Caco-2 (cell line): ENCODE measurements at regions of chr3 and their contacts with region 1.

Region 1: GRCh38 chr3:23219117-23219516 is 16.0 kb downstream of the UBE2E2 start:
- DNase-seq: peak in 1 of 2 experiments; percentile 2
- H3K4me3 ChIP-seq: no peak overlapping the region
- H3K4me3 Mint-ChIP-seq: no peak overlapping the region
- H3K27ac Mint-ChIP-seq: peak overlapping the region; percentile 29
- H3K4me1 ChIP-seq: peaks cover 24% of the 10 kb centered on the region; the same call in 1 of the 2 replicates
- H3K4me1 Mint-ChIP-seq: peaks cover 9% of the 10 kb centered on the region
- H3K27me3 ChIP-seq: no peaks in the 10 kb centered on the region
- H3K27me3 Mint-ChIP-seq: no peaks in the 10 kb centered on the region
- CTCF ChIP-seq: no peak

Region 2: GRCh38 chr3:22960105-22960984 is 258.8 kb before region 1 on chr3:
- CTCF ChIA-PET with region 1: no interaction called
- POLR2A ChIA-PET with region 1: no interaction called
- intact Hi-C with region 1: no loop called
- DNase-seq: peak in 1 of 2 experiments; percentile 40
- H3K4me3 ChIP-seq: no peak overlapping the region
- H3K4me3 Mint-ChIP-seq: no peak overlapping the region
- H3K27ac Mint-ChIP-seq: no peak overlapping the region
- H3K4me1 ChIP-seq: no peaks in the 10 kb centered on the region
- H3K4me1 Mint-ChIP-seq: no peaks in the 10 kb centered on the region
- H3K27me3 ChIP-seq: no peaks in the 10 kb centered on the region
- H3K27me3 Mint-ChIP-seq: peaks cover 6% of the 10 kb centered on the region
- CTCF ChIP-seq: peak in 1 of 2 experiments; percentile 76

Region 3: GRCh38 chr3:23202921-23203707 is 16.0 kb before region 1 on chr3 and contains the start of gene UBE2E2:
- CTCF ChIA-PET with region 1: no interaction called
- POLR2A ChIA-PET with region 1: no interaction called
- intact Hi-C with region 1: loop called (anchors 1 kb)
- DNase-seq: peak; percentile 75 to 85
- H3K4me3 ChIP-seq: peak within 1 kb of the TSS; percentile 92
- H3K4me3 Mint-ChIP-seq: peak within 1 kb of the TSS; percentile 87
- H3K27ac Mint-ChIP-seq: peak within 1 kb of the TSS; percentile 78
- H3K4me1 ChIP-seq: peaks cover 15% of the 10 kb centered on the region
- H3K4me1 Mint-ChIP-seq: peaks cover 8% of the 10 kb centered on the region
- H3K27me3 ChIP-seq: no peaks in the 10 kb centered on the region
- H3K27me3 Mint-ChIP-seq: no peaks in the 10 kb centered on the region
- CTCF ChIP-seq: no peak
- total RNA-seq, gene UBE2E2: 67.5 and 83.8 TPM in 2 replicates